ENCODE measurements at regions of chr21 and their contacts with region 1.

Region 1: GRCh38 chr21:45973659-45974072 is 7.9 kb upstream of the COL6A1 start:
- DNase-seq: peak; percentile 65 to 84 (median 70)
- H3K4me3 ChIP-seq: peak overlapping the region; percentile 78
- H3K4me3 Mint-ChIP-seq: peak overlapping the region; percentile 82 to 96 (median 89)
- H3K27ac ChIP-seq: peak overlapping the region; percentile 16
- H3K27ac Mint-ChIP-seq: peak overlapping the region in 7 of 8 donors; percentile 41 to 88 (median 80)
- H3K4me1 ChIP-seq: peaks cover 28% of the 10 kb centered on the region
- H3K4me1 Mint-ChIP-seq: peaks cover 11 to 30% (median 14%) of the 10 kb centered on the region in 3 donors
- H3K27me3 ChIP-seq: peaks cover 33% of the 10 kb centered on the region
- H3K27me3 Mint-ChIP-seq: peaks cover 20 to 35% of the 10 kb centered on the region in 2 donors

Region 2: DNA sequence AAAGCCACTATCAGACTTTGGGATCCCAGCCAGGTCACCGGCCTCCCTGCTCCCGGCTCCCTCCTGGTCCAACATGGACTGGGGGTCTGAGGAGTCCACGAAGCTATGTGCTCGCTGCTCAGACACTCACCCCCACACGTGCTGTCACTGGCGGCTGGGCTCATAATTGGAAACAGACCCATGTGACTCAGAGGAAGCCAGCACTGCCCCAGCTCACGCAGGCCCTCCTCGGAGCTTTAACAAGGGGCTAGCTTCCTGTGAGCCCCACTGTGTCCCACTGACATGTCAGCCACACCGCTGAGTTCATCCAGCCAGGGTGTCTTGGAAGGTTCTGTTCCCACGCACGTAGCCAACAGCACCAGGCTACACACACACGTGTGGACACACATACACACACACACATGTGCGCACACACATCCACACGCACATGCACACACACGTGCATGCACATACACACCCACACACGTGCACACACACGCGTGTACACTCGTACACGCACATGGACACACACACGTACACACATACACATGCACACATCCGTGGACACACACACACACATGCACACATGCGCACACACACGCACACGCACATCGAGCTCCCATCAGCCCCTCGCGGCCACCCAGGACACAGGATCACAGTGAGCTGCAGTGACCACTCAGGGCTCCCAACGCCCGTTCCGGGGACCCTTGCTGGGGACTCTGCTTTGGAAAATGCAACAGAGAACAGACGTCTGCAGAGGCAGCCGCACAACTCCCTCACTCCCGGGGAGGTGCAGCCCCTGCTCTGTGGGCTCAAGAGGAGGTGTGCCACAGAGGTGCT is 105.9 kb after region 1 on chr21:
- CTCF ChIA-PET with region 1: no interaction called
- POLR2A ChIA-PET with region 1: no interaction called
- DNase-seq: peak in 1 of 5 donors; percentile 15
- H3K4me3 ChIP-seq: no peak overlapping the region
- H3K4me3 Mint-ChIP-seq: no peak overlapping the region
- H3K27ac ChIP-seq: no peak overlapping the region
- H3K27ac Mint-ChIP-seq: no peak overlapping the region
- H3K4me1 ChIP-seq: no peaks in the 10 kb centered on the region
- H3K4me1 Mint-ChIP-seq: no peaks in the 10 kb centered on the region
- H3K27me3 ChIP-seq: no peaks in the 10 kb centered on the region
- H3K27me3 Mint-ChIP-seq: peaks cover 7 to 8% of the 10 kb centered on the region in 2 donors

Region 3: GRCh38 chr21:46228345-46229051 is 254.8 kb after region 1 on chr21 and contains the start of gene LSS:
- CTCF ChIA-PET with region 1: no interaction called
- POLR2A ChIA-PET with region 1: interaction called, 11 read pairs
- DNase-seq: peak; percentile 98 to 99 (median 98)
- H3K4me3 ChIP-seq: peak within 1 kb of the TSS; percentile 65
- H3K4me3 Mint-ChIP-seq: peak within 1 kb of the TSS; percentile 81 to 98 (median 93)
- H3K27ac ChIP-seq: peak within 1 kb of the TSS; percentile 76
- H3K27ac Mint-ChIP-seq: peak within 1 kb of the TSS; percentile 57 to 99 (median 96)
- H3K4me1 ChIP-seq: peaks cover 29% of the 10 kb centered on the region
- H3K4me1 Mint-ChIP-seq: peaks cover 43 to 68% (median 54%) of the 10 kb centered on the region in 3 donors
- H3K27me3 ChIP-seq: no peaks in the 10 kb centered on the region
- H3K27me3 Mint-ChIP-seq: no peaks in the 10 kb centered on the region
- total RNA-seq, gene LSS: 19.6 to 20.4 TPM

Region 4: DNA sequence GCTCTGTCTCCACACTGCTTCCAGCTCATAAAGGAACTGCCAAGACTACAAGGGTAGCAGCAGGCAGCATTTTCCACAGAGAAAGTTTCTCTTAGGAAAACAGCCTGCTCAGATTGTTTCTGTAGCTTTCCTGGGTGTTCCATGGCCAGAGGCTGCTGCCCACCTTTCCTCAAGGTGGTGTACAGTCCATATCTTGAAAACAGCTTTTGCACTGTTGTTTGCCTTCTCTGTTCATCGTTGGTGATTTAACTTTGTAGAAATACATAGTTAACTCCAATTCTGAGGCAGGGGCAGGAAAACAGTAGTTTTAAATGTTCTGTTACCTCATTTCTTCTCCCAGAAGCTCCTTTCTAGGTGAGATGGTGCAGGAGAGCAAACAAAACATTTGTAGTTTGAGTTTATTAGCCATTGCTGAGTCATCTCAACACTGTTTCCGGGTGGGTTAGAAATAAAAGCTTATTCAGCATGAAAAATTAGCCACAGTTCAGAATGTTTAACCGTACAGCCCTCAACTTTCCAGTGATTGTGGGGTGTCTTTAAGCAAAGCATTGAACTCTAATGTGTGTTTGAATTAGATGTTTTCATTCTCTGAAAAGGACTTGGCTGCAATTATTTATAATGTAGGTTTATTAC is 526.7 kb after region 1 on chr21:
- CTCF ChIA-PET with region 1: no interaction called
- POLR2A ChIA-PET with region 1: interaction called, 16 read pairs
- DNase-seq: peak in 2 of 5 donors; percentile 5 to 10
- H3K4me3 ChIP-seq: no peak overlapping the region
- H3K4me3 Mint-ChIP-seq: peak overlapping the region in 4 of 7 donors; percentile 15 to 43 (median 22)
- H3K27ac ChIP-seq: peak overlapping the region; percentile 39
- H3K27ac Mint-ChIP-seq: peak overlapping the region; percentile 36 to 90 (median 64)
- H3K4me1 ChIP-seq: peaks cover 13% of the 10 kb centered on the region
- H3K4me1 Mint-ChIP-seq: peaks cover 29 to 48% (median 40%) of the 10 kb centered on the region in 3 donors
- H3K27me3 ChIP-seq: no peaks in the 10 kb centered on the region
- H3K27me3 Mint-ChIP-seq: no peaks in the 10 kb centered on the region

Measured in CD8-positive, alpha-beta memory T cell (primary cell).